ENCODE measurements at regions of chr18 and their contacts with region 1.

Region 1: GRCh38 chr18:73007195-73007914 is 139.6 kb upstream of the NETO1 start:
- DNase-seq: no peak
- H3K4me3 ChIP-seq: no peak overlapping the region
- H3K27ac ChIP-seq: no peak overlapping the region
- H3K4me1 ChIP-seq: no peaks in the 10 kb centered on the region
- H3K27me3 ChIP-seq: no peaks in the 10 kb centered on the region
- CTCF ChIP-seq: no peak
- POLR2A ChIP-seq: no peak

Region 2: GRCh38 chr18:73733806-73734314 is 726.5 kb after region 1 on chr18:
- intact Hi-C with region 1: loop called (anchors 5 kb)
- DNase-seq: no peak
- H3K4me3 ChIP-seq: no peak overlapping the region
- H3K27ac ChIP-seq: no peak overlapping the region
- H3K4me1 ChIP-seq: no peaks in the 10 kb centered on the region
- H3K27me3 ChIP-seq: no peaks in the 10 kb centered on the region
- CTCF ChIP-seq: no peak
- POLR2A ChIP-seq: no peak

Measured in breast epithelium (tissue), 4 donors.